Activated CD4-positive, alpha-beta T cell treated with anti-CD3 and anti-CD28 coated beads, Interleukin-2, amount 10 ng/mL, durations not matched to agents 7 days and 5 days (primary cell): ENCODE measurements at regions of chr9 and their contacts with region 1.

Region 1: GRCh38 chr9:91193087-91193657 is 168.5 kb downstream of the AUH start:
- DNase-seq: peak; percentile 61
- H3K4me3 Mint-ChIP-seq: peak overlapping the region; percentile 71
- H3K27ac Mint-ChIP-seq: peak overlapping the region; percentile 98
- H3K4me1 Mint-ChIP-seq: peaks cover 61% of the 10 kb centered on the region
- H3K27me3 Mint-ChIP-seq: no peaks in the 10 kb centered on the region

Region 2: GRCh38 chr9:91150998-91151717 is 42.0 kb before region 1 on chr9:
- CTCF ChIA-PET with region 1: interaction called, 10 read pairs
- POLR2A ChIA-PET with region 1: no interaction called
- DNase-seq: peak; percentile 76
- H3K4me3 Mint-ChIP-seq: peak overlapping the region; percentile 16
- H3K27ac Mint-ChIP-seq: peak overlapping the region; percentile 86
- H3K4me1 Mint-ChIP-seq: peaks cover 88% of the 10 kb centered on the region
- H3K27me3 Mint-ChIP-seq: no peaks in the 10 kb centered on the region